PC-9 (cell line): ENCODE measurements at regions of chr22 and their contacts with region 1.

Region 1: DNA sequence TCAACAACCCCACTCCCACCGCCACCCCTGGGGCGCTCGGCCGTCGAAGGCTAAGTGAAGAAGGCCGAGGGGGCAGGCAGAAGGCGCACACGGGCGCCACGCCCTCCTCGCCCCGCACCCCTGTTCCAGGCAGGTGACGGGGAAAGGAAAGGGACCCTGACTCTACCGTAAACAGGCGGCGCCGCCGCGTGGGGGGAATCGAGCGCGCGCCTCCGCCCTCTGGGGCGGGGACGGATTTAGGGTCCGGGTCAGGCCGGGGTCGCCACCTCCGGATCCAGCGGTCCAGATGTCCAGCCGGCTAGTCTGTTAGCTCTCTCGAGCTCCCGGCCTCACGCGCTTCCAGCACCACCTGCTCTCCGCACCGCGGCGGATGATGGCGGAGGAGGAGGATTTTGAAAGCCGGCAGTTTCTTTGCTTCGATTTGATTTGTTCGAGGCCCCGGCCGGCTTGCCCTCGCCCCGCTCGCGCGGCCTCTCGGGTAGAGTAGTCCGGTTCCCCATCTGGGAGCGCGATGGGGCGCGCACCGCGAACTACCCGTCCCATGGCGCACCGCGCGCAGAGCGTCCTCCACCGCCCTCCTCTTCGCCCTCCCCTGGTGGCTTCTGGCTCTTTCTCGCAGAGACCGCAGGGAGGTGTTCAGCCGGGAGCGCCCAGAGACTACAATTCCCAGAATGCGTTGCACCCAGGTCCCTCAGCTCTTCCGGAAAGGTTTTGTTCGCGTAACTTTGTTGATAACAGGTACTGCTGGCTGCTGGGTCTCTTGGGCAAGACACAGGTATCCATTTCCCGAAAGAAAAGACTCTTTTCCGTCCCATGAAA is at the start of gene RANGAP1:
- DNase-seq: peak; percentile 98
- H3K4me3 ChIP-seq: peak within 1 kb of the TSS; percentile 99
- H3K27ac ChIP-seq: peak within 1 kb of the TSS; percentile 93
- H3K4me1 ChIP-seq: peaks cover 58% of the 10 kb centered on the region
- H3K27me3 ChIP-seq: no peaks in the 10 kb centered on the region
- CTCF ChIP-seq: 0 out of 2 replicates have a peak, but pooled peaks have one; percentile 20
- total RNA-seq, gene RANGAP1: 142 and 160 TPM in 2 replicates

Region 2: DNA sequence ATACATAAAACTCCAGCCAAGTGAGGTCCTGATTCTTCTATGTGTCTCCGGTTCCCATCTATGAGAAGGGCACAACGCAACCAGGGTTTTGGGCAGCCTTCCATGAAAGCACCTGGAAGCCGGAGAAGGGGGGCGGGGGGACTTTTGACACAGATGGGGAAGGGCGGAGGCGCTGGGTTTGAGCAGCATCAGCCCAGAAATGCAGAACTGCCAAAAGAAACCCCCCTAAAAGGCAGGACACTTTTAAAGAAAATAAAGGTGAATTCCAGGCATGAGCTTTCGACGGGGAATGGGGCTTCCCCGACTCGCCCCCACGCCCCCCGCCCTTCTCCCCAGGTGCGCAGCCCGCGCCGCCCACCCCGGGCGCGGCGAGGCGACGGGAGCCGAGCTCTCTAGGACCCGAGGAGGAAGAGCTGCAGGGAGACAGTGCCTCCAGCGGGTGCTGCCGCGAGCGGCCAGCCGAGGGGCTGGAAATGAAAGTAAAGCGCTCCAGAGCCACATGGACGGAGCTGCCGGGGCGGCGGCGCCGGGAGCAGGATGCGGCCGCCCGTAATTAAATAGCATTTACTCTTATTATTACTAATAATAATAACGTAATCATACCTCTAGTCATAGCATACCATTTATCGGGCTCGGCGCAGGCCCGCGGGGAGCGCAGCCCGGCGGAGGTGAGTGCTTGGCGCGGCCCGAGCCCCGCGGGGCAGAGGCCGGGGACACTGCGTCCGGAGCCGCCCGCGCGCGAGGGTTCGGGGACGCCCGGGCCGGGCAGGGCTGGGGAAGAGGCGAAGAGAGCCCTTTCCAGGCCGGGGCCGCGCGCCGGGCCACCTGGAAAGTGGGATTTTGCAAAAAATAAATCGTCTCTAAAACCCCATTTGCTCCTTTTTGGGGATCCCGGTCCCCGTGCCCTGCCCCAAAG is 15.3 kb after region 1 on chr22 and contains the start of gene ZC3H7B:
- CTCF ChIA-PET with region 1: no interaction called
- POLR2A ChIA-PET with region 1: interaction called, 7 read pairs
- intact Hi-C with region 1: loop called (anchors 1 kb)
- DNase-seq: peak; percentile 77 to 79
- H3K4me3 ChIP-seq: peak within 1 kb of the TSS; percentile 99
- H3K27ac ChIP-seq: peak within 1 kb of the TSS; percentile 1; the same call in 1 of the 2 replicates
- H3K4me1 ChIP-seq: peaks cover 37% of the 10 kb centered on the region
- H3K27me3 ChIP-seq: no peaks in the 10 kb centered on the region
- CTCF ChIP-seq: peak; percentile 63
- total RNA-seq, gene ZC3H7B: 54.5 and 62.7 TPM in 2 replicates

Region 3: GRCh38 chr22:41367039-41367679 is 81.1 kb after region 1 on chr22:
- CTCF ChIA-PET with region 1: interaction called, 5 read pairs
- POLR2A ChIA-PET with region 1: interaction called, 4 read pairs
- intact Hi-C with region 1: loop called (anchors 5 kb)
- DNase-seq: peak; percentile 85 to 98
- H3K4me3 ChIP-seq: no peak overlapping the region; the same call in 1 of the 2 replicates
- H3K27ac ChIP-seq: no peak overlapping the region
- H3K4me1 ChIP-seq: peaks cover 16% of the 10 kb centered on the region
- H3K27me3 ChIP-seq: no peaks in the 10 kb centered on the region
- CTCF ChIP-seq: no peak